PC-9 (cell line): ENCODE measurements at regions of chr16 and their contacts with region 1.

Region 1: DNA sequence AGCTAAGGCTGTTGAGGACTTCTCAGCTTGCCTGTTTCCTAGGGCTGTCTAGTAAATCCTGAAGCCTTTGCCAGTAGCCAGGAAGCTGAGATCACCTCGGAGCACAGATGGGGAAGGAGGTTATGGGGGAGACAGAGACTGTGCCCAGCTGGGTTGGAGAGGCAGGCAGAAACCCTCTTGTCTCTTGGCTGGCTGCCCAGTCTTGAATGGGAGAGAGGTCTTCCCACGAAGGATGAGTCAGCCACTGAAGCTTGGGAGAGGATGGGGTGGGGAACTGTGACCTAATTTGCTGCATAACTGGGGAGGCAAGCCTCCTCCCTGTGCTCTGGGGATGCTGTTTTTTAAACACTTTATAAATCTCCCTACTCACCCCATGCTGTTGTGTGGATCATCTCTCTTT is 69.8 kb downstream of the SHISA9 start:
- DNase-seq: peak; percentile 90 to 93
- H3K4me3 ChIP-seq: peak overlapping the region; percentile 13; the same call in 1 of the 2 replicates
- H3K27ac ChIP-seq: peak overlapping the region; percentile 81
- H3K4me1 ChIP-seq: peaks cover 49% of the 10 kb centered on the region
- H3K27me3 ChIP-seq: no peaks in the 10 kb centered on the region
- CTCF ChIP-seq: no peak

Region 2: GRCh38 chr16:12375046-12375740 is 596.0 kb before region 1 on chr16:
- CTCF ChIA-PET with region 1: interaction called, 17 read pairs
- POLR2A ChIA-PET with region 1: no interaction called
- intact Hi-C with region 1: no loop called
- DNase-seq: no peak
- H3K4me3 ChIP-seq: no peak overlapping the region
- H3K27ac ChIP-seq: no peak overlapping the region
- H3K4me1 ChIP-seq: no peaks in the 10 kb centered on the region
- H3K27me3 ChIP-seq: no peaks in the 10 kb centered on the region
- CTCF ChIP-seq: no peak